IMR-90 (cell line): ENCODE measurements at regions of chr2 and their contacts with region 1.

Region 1: GRCh38 chr2:199985625-199986207 is 30.3 kb downstream of the MAIP1 start:
- DNase-seq: peak; percentile 81
- ATAC-seq: peak; percentile 66
- H3K4me3 ChIP-seq: no peak overlapping the region
- H3K27ac ChIP-seq: no peak overlapping the region
- H3K4me1 ChIP-seq: peaks cover 6% of the 10 kb centered on the region; the same call in 1 of the 2 replicates
- H3K27me3 ChIP-seq: no peaks in the 10 kb centered on the region
- CTCF ChIP-seq: peak; percentile 71
- POLR2A ChIP-seq: no peak
- RAD21 ChIP-seq: peak; percentile 80

Region 2: DNA sequence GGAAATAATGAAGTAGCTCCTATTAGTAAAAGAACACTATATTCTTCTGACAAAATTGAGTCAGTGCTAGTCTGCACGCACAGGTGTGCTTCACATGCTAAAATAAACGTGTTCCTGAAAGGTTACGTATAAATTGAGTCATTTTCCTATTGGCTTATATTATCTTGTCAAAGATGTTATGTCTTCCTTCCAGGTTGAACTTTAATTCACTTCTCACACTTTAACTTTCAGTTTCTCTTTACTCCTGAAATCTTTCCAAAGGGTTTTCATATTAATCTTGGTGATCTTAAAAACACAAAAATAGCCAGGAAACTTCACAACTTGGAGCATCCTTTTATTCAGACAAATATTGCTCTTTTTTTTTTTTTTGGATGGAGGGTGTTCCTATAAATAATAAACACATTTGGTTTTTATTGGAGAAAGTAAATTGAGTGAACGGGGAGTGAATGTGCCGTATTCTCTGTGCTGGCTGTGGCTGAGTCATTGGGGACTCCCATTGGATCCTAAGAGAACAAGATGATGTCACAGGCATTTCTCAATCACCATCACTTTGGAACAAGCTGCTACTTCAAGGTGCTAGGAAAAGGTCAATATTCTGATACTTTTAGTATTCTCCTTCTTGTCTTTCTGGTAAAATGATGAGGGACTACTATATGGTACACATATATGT is 170.6 kb after region 1 on chr2:
- CTCF ChIA-PET with region 1: no interaction called
- POLR2A ChIA-PET with region 1: no interaction called
- dilution Hi-C with region 1: no loop called
- in situ Hi-C with region 1: no loop called
- intact Hi-C with region 1: loop called (anchors 10 kb)
- DNase-seq: peak; percentile 93
- ATAC-seq: peak; percentile 71
- H3K4me3 ChIP-seq: peak overlapping the region; percentile 39; the same call in 1 of the 2 replicates
- H3K27ac ChIP-seq: no peak overlapping the region
- H3K4me1 ChIP-seq: peaks cover 13% of the 10 kb centered on the region
- H3K27me3 ChIP-seq: no peaks in the 10 kb centered on the region
- CTCF ChIP-seq: no peak
- POLR2A ChIP-seq: no peak
- RAD21 ChIP-seq: no peak

Region 3: DNA sequence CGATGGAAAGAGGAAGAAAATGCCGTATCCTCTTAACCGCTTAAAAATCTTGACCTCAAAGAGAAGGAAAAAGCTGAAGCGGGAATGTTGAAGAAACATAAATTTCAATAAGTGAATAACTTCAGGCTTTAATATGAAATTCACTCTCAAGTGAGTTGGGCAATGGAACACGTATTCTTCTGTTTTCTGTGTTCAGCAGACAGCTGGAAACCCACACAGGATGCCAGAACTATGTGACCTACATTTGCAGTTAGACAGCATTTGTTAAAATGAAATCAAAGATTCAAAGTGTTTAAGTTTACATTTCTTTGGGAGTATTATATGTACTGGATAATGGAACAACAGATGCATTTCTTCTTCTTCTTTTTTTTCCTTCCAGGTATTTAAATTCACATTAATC is 240.2 kb after region 1 on chr2:
- CTCF ChIA-PET with region 1: no interaction called
- POLR2A ChIA-PET with region 1: no interaction called
- dilution Hi-C with region 1: no loop called
- in situ Hi-C with region 1: no loop called
- intact Hi-C with region 1: no loop called
- DNase-seq: peak; percentile 28
- ATAC-seq: no peak
- H3K4me3 ChIP-seq: no peak overlapping the region
- H3K27ac ChIP-seq: no peak overlapping the region
- H3K4me1 ChIP-seq: no peaks in the 10 kb centered on the region; the same call in 1 of the 2 replicates
- H3K27me3 ChIP-seq: peaks cover 4% of the 10 kb centered on the region; the same call in 1 of the 2 replicates
- CTCF ChIP-seq: no peak
- POLR2A ChIP-seq: no peak
- RAD21 ChIP-seq: no peak